Aorta (tissue), 5 donors: ENCODE measurements at regions of chr17 and their contacts with region 1.

Region 1: GRCh38 chr17:42843358-42843934 is 934 bp upstream of the AOC2 start:
- DNase-seq: no peak
- ATAC-seq: peak; percentile 85
- H3K4me3 ChIP-seq: no peak overlapping the region
- H3K27ac ChIP-seq: no peak overlapping the region
- H3K4me1 ChIP-seq: no peaks in the 10 kb centered on the region
- H3K27me3 ChIP-seq: no peaks in the 10 kb centered on the region

Region 2: DNA sequence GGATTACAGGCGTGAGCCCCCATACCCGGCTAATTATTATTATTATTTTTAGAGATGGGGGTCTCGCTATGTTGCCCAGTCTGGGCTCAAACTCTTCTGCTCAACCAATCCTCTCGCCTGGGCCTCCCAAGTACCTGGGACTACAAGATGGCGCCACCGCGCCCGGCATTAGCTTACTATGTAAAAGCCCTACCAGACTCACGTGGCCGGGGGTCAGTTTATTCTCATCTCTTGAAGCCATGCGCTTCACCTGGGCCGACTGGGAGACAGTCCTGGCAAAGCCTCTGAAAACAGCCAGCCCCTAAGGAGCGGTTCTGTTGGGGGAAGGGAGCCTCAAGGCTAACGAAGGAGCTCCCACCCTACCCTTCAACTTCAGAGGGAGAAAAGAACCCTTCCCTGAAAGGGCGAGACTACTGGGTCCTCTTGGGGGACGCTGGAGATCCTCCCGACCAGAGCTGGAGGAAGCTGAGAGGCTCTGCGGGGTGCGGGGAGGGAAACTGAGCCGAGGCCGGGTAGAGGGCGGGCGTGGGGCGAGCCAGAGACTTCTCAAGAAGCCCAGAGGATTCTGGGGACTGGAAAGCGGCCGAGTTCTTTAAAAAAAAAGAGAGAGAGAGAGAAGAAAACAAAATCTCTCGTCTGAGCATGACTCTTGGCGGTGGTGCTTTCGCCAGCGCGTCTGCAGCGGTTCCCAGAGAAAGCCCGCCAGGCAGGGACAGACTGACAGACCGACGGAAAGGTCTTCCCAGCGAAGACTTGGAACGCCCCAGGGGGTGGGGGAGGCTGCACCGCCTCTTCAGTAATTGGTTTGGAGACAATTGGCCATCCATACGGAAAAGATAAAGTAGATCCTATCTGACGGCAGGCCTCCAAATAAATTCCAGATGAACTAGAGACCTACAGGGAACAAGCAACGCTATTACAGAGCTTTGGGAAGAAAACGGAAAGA is 190.0 kb before region 1 on chr17:
- intact Hi-C with region 1: no loop called
- DNase-seq: peak; percentile 79 to 87
- ATAC-seq: peak; percentile 88
- H3K4me3 ChIP-seq: peak overlapping the region; percentile 33 to 36
- H3K27ac ChIP-seq: peak overlapping the region in 1 of 2 donors; percentile 52
- H3K4me1 ChIP-seq: no peaks in the 10 kb centered on the region
- H3K27me3 ChIP-seq: no peaks in the 10 kb centered on the region

Region 3: DNA sequence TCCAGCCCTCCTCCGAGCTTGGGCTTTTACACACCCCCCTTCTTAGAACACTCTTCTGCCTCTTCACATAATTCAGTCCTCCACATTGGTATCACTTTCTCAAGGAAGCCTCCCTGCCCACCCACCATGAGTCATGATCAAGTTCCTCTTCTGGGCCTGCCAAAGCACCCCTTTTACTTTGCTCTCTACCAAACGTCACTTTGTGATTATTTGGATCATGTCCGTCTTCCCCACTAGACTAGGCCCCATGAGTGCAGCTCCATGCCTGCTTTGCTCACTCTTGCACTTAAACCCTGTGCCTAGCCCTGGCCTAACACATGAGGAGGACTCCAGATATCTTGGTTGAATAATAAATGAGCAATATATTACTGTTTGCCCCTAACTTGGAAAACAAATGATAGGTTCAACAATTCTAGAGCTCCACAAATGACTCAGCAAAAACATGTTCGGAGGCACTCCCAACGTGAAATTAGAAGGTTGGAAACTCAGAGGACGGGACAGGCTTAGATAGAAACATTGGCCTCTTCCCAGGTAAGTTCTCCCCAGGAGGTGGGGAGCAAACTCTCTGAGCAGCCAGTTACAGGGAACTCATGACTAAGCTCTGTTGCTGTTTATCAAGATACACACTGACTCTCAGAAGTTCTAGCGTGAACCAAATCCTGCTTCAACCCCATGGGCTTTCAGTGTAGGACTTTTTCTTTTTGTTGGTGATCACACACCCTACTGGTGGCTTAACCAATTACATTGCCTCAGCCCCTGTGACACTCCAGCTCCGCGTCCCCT is 85.5 kb after region 1 on chr17:
- intact Hi-C with region 1: loop called in 1 of 2 experiments (anchors 2 kb)
- DNase-seq: peak in 1 of 2 donors; percentile 59
- ATAC-seq: peak; percentile 92
- H3K4me3 ChIP-seq: no peak overlapping the region
- H3K27ac ChIP-seq: peak overlapping the region; percentile 0 to 58
- H3K4me1 ChIP-seq: no peaks in the 10 kb centered on the region
- H3K27me3 ChIP-seq: no peaks in the 10 kb centered on the region

Region 4: DNA sequence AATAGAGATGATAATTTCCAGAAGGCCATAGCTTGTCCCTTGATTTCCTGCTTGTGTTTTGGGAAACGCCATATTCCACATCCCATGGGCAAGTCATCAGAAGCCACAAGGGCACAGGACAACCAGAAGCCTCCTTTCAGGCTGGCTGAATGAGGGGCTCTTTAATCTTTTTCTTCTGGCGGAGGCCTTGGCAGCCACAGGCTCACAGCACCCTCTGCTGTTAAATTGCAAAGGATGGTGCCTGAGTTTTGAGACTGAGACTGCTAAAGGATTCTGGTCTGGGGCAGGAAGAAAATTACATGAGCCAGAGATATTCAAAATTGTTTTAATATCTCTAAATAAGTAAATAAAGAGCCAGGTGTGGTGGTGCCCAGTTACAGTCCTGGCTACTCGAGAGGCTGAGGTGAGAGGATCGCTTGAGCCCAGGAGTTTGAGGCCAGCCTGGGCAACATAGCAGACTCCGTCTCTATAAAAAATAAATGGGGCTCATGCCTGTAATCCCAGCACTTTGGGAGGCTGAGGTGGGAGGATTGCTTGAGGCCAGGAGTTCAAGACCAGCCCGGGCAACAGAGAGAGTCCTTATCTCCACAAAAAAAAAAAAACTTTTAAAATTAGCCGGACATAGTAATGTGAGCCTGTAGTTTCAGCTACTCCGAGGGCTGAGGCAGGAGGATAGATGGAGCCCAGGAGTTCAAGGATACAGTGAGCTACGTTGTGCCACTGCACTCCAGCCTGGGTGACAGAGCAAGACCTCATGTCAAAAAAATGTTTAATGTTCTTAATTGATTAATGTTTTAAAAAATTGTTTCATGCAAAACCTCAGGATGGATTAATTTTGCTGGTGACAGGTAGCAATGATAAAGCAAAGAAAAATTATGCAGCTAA is 94.5 kb after region 1 on chr17:
- intact Hi-C with region 1: loop called (anchors 2 kb)
- DNase-seq: peak in 1 of 2 donors; percentile 52
- ATAC-seq: peak; percentile 66
- H3K4me3 ChIP-seq: no peak overlapping the region
- H3K27ac ChIP-seq: no peak overlapping the region
- H3K4me1 ChIP-seq: no peaks in the 10 kb centered on the region
- H3K27me3 ChIP-seq: no peaks in the 10 kb centered on the region

Region 5: GRCh38 chr17:42997984-42998938 is 154.8 kb after region 1 on chr17 and contains the start of gene RPL27:
- intact Hi-C with region 1: loop called (anchors 2 to 10 kb)
- DNase-seq: peak; percentile 98 to 99
- ATAC-seq: peak; percentile 98
- H3K4me3 ChIP-seq: peak within 1 kb of the TSS; percentile 46 to 75
- H3K27ac ChIP-seq: peak within 1 kb of the TSS; percentile 45 to 83
- H3K4me1 ChIP-seq: no peaks in the 10 kb centered on the region
- H3K27me3 ChIP-seq: no peaks in the 10 kb centered on the region
- total RNA-seq, gene RPL27: 723 to 755 TPM